Aorta (tissue), 5 donors: ENCODE measurements at regions of chr4 and their contacts with region 1.

Region 1: GRCh38 chr4:46931981-46932380 is 22.9 kb upstream of the COX7B2 start:
- DNase-seq: peak in 1 of 2 donors; percentile 38
- ATAC-seq: peak; percentile 46
- H3K4me3 ChIP-seq: no peak overlapping the region
- H3K27ac ChIP-seq: no peak overlapping the region
- H3K4me1 ChIP-seq: no peaks in the 10 kb centered on the region
- H3K27me3 ChIP-seq: no peaks in the 10 kb centered on the region

Region 2: DNA sequence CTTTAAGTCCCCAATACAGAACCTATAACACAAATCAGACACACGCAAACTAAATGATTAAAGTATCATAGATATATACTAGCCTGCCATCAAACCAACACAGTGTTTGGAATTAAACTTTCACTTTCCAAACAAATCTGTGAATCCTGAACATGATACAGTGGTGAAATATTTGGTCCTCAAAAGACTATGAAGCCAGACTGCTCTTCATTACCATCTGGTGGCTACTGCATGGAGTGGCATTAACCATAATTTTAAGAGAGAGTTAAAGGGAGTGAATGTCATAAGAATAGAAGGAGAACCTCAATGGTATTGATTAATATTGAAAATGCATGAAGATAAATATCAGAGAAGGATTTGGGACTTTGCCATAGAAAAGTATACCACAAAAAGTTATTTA is 70.6 kb after region 1 on chr4:
- intact Hi-C with region 1: no loop called
- DNase-seq: no peak
- ATAC-seq: no peak
- H3K4me3 ChIP-seq: no peak overlapping the region
- H3K27ac ChIP-seq: no peak overlapping the region
- H3K4me1 ChIP-seq: no peaks in the 10 kb centered on the region
- H3K27me3 ChIP-seq: no peaks in the 10 kb centered on the region

Region 3: GRCh38 chr4:47032415-47033106 is 100.6 kb after region 1 on chr4:
- intact Hi-C with region 1: loop called in 1 of 2 experiments (anchors 10 kb)
- DNase-seq: peak in 1 of 2 donors; percentile 82
- ATAC-seq: peak; percentile 71
- H3K4me3 ChIP-seq: no peak overlapping the region
- H3K27ac ChIP-seq: no peak overlapping the region
- H3K4me1 ChIP-seq: no peaks in the 10 kb centered on the region
- H3K27me3 ChIP-seq: no peaks in the 10 kb centered on the region

Region 4: DNA sequence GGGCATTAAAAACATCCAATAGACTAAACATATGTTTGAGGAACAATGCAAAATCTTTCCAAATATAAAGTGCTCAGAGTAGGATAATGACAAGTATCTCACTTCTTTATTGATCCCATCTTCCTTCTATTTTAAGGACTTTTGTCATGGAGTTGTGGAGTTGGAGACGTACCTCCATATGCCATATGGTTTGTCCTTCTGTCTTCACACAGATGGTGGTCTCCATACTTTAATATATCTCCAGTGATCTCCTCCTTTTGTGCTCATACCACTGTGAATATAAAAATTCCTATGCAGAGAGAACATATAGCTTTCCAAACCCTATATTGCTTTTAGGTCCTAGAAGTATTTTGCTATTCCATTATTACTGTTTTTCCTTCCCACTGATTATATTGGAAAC is 163.9 kb after region 1 on chr4:
- intact Hi-C with region 1: loop called in 1 of 2 experiments (anchors 10 kb)
- DNase-seq: no peak
- ATAC-seq: no peak
- H3K4me3 ChIP-seq: no peak overlapping the region
- H3K27ac ChIP-seq: no peak overlapping the region
- H3K4me1 ChIP-seq: no peaks in the 10 kb centered on the region
- H3K27me3 ChIP-seq: no peaks in the 10 kb centered on the region

Region 5: GRCh38 chr4:47122592-47123291 is 190.8 kb after region 1 on chr4:
- intact Hi-C with region 1: loop called in 1 of 2 experiments (anchors 10 kb)
- DNase-seq: peak in 1 of 2 donors; percentile 47
- ATAC-seq: peak; percentile 46
- H3K4me3 ChIP-seq: no peak overlapping the region
- H3K27ac ChIP-seq: no peak overlapping the region
- H3K4me1 ChIP-seq: no peaks in the 10 kb centered on the region
- H3K27me3 ChIP-seq: no peaks in the 10 kb centered on the region